Common myeloid progenitor, CD34-positive (primary cell): ENCODE measurements at regions of chr19 and their contacts with region 1.

Region 1: DNA sequence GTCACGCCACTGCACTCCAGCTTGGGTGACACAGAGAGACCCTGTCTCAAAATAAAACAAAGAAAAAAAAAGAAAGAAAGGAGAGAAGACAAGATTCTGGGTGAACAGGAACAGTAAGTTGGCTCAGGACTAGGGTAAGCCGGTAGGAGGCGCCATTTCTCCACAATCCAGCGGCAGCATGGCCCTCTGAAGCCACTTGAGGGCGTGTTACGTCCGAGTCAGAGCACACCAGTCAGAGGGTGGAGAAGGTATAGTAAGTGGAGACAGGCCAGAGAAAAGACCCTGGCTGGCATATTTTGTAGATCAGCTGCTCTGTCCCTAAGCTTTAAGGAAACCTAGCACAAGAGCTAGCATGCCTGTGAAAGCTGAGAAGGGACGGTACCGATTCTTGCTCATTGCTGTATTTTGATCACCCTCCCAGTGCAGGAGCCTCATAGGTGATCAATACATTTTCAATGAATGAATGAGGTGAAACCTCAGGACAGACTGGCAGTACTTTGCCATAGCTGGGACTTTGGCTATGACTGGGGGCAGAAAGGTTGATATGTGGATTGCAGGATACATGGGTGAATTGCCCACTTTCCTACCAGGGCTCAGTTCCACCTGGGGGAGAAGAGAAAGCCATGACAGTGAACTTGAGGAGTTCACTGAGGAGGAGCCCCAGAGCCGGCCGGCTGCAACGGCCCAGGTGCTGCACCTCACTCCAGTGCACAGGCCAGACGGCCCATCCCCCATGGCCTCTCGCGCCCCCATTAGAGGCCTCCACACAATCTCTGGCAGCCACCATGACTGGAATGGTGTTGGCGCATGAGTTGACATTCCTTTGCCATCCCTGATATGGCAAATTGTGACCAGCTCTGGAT is 23.5 kb downstream of the POU2F2 start:
- DNase-seq: peak; percentile 89 to 96 (median 93)
- H3K4me3 ChIP-seq: no peak overlapping the region
- H3K27ac ChIP-seq: no peak overlapping the region
- H3K4me1 ChIP-seq: peaks cover 0 to 9% (median 4%) of the 10 kb centered on the region in 4 experiments
- H3K27me3 ChIP-seq: no peaks in the 10 kb centered on the region

Region 2: GRCh38 chr19:42057846-42058245 is 50.9 kb before region 1 on chr19:
- CTCF ChIA-PET with region 1: no interaction called
- POLR2A ChIA-PET with region 1: no interaction called
- DNase-seq: no peak
- H3K4me3 ChIP-seq: no peak overlapping the region
- H3K27ac ChIP-seq: no peak overlapping the region
- H3K4me1 ChIP-seq: peaks cover 0 to 4% (median 0%) of the 10 kb centered on the region in 4 experiments
- H3K27me3 ChIP-seq: no peaks in the 10 kb centered on the region

Region 3: DNA sequence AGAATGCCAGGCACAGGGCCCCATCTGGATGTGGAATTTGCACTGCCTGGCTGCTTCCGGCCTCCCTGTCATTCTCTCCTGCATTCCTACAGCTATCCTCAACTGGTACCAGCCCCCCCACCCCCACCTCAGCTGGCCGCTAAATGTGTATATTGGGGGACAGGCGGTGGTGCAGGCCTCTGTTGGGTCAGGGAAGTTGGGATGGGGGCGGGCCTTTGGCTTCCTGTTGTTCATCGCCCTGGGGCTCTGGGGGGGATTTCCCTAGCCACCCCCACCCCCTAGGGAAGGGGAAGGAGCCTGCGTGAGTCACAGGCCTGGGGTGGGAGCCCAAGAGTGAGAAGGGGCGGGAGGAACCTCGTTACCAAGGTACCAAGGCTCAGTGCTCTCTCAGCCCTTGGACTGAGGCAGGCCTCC is 12.9 kb after region 1 on chr19:
- CTCF ChIA-PET with region 1: interaction called, 68 read pairs
- POLR2A ChIA-PET with region 1: no interaction called
- DNase-seq: peak; percentile 76 to 94 (median 93)
- H3K4me3 ChIP-seq: peak overlapping the region in 5 of 7 experiments; percentile 15 to 71 (median 46)
- H3K27ac ChIP-seq: peak overlapping the region; percentile 50 to 82
- H3K4me1 ChIP-seq: peaks cover 10 to 37% (median 34%) of the 10 kb centered on the region in 4 experiments
- H3K27me3 ChIP-seq: no peaks in the 10 kb centered on the region

Region 4: DNA sequence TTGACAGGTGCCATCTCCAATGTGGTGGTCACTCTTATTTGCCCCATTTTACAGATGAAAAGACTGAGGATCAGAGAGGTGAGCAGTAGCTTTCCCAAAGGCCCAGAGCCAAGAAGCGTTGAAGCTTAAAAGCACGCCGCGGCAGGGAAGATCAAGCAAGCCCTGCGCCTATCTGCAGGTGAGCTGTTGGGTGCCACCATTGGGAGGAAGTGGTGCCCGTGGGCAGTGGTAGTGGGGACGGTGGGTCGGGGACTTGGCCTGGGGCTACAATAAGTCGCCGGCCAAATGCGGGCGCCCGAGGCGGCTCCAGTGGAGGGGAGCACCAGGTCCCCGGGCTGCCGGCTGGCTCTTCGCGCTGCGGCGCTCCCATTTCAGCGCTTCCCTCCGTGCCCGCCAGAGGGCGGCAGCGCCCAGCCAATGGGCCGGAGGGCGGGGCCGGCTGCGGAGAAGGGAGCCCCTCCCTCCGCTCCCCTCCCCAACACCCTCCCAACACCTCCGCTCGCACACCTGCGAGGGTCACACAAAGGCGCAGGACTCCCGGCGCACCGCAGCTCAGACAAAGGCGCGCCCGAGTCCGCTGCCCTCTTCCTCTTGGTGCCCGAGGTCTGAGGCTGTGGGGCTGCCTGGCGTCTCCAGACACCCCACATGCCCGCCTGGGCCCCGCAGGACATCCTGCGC is 24.2 kb after region 1 on chr19:
- CTCF ChIA-PET with region 1: interaction called, 23 read pairs
- POLR2A ChIA-PET with region 1: no interaction called
- DNase-seq: peak; percentile 61 to 69 (median 68)
- H3K4me3 ChIP-seq: peak overlapping the region; percentile 31 to 82 (median 70)
- H3K27ac ChIP-seq: no peak overlapping the region
- H3K4me1 ChIP-seq: peaks cover 12 to 80% (median 58%) of the 10 kb centered on the region in 4 experiments
- H3K27me3 ChIP-seq: no peaks in the 10 kb centered on the region

Region 5: GRCh38 chr19:42184401-42184861 is 75.7 kb after region 1 on chr19:
- CTCF ChIA-PET with region 1: interaction called, 69 read pairs
- POLR2A ChIA-PET with region 1: interaction called, 3 read pairs
- DNase-seq: peak; percentile 59 to 75 (median 70)
- H3K4me3 ChIP-seq: no peak overlapping the region
- H3K27ac ChIP-seq: no peak overlapping the region
- H3K4me1 ChIP-seq: peaks cover 7 to 33% (median 27%) of the 10 kb centered on the region in 4 experiments
- H3K27me3 ChIP-seq: peaks cover 0 to 17% (median 8%) of the 10 kb centered on the region in 5 experiments

Region 6: GRCh38 chr19:42233106-42233505 is 124.3 kb after region 1 on chr19:
- CTCF ChIA-PET with region 1: interaction called, 11 read pairs
- POLR2A ChIA-PET with region 1: interaction called, 3 read pairs
- DNase-seq: no peak
- H3K4me3 ChIP-seq: no peak overlapping the region
- H3K27ac ChIP-seq: no peak overlapping the region
- H3K4me1 ChIP-seq: peaks cover 0 to 6% (median 2%) of the 10 kb centered on the region in 4 experiments
- H3K27me3 ChIP-seq: no peaks in the 10 kb centered on the region

Region 7: GRCh38 chr19:42283143-42284065 is 174.6 kb after region 1 on chr19:
- CTCF ChIA-PET with region 1: interaction called, 29 read pairs
- POLR2A ChIA-PET with region 1: no interaction called
- DNase-seq: peak; percentile 93 to 97 (median 96)
- H3K4me3 ChIP-seq: peak overlapping the region in 6 of 7 experiments; percentile 2 to 91 (median 64)
- H3K27ac ChIP-seq: peak overlapping the region; percentile 4 to 73
- H3K4me1 ChIP-seq: peaks cover 9 to 73% (median 63%) of the 10 kb centered on the region in 4 experiments
- H3K27me3 ChIP-seq: no peaks in the 10 kb centered on the region

Region 8: DNA sequence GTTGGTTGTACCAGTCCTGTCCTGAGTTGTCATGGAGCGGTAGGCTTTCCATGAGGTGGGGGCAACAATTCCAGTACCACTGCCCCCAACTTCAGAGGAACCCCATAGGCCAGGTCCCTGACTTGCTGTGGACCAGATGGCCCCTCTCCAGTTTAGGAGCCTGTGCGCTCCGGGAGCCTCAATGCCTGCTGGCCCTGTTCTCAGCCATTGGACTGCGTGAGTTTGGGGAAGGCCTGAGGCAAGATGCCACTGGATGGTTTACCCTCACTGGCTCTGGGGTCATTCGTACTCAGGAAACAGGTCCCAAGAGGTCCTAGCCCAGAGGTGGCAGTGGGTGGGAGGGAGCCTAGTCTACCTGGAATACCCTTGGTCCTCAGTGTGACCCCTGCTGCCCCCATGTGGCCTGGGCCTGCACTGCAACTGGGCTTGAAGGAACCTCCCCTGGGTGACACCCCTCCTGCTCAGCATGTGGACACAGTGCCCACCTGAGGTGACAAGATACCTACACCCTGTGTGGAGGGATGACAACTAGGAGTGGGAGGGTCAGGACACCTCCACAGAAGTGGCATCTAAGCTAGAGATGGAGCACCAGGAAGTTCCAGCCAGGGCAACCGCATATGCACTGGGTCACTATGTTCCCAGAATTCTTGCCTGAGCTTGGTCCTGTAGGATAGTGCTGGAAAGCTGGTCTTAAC is 187.2 kb after region 1 on chr19:
- CTCF ChIA-PET with region 1: interaction called, 30 read pairs
- POLR2A ChIA-PET with region 1: no interaction called
- DNase-seq: peak; percentile 64 to 80 (median 71)
- H3K4me3 ChIP-seq: no peak overlapping the region
- H3K27ac ChIP-seq: no peak overlapping the region
- H3K4me1 ChIP-seq: no peaks in the 10 kb centered on the region
- H3K27me3 ChIP-seq: no peaks in the 10 kb centered on the region